ENCODE measurements at regions of chr6 and their contacts with region 1.

Region 1: GRCh38 chr6:27518881-27519795 is 46.2 kb upstream of the ZNF184 start:
- DNase-seq: peak; percentile 65
- ATAC-seq: peak; percentile 85
- H3K4me3 Mint-ChIP-seq: peak overlapping the region; percentile 70
- H3K27ac Mint-ChIP-seq: peak overlapping the region; percentile 47
- H3K4me1 Mint-ChIP-seq: peaks cover 11% of the 10 kb centered on the region
- H3K27me3 Mint-ChIP-seq: peaks cover 28% of the 10 kb centered on the region

Region 2: GRCh38 chr6:27502508-27503435 is 16.4 kb before region 1 on chr6:
- CTCF ChIA-PET with region 1: interaction called, 40 read pairs
- POLR2A ChIA-PET with region 1: interaction called, 3 read pairs
- DNase-seq: peak; percentile 80
- ATAC-seq: peak; percentile 74
- H3K4me3 Mint-ChIP-seq: peak overlapping the region; percentile 76
- H3K27ac Mint-ChIP-seq: peak overlapping the region; percentile 74
- H3K4me1 Mint-ChIP-seq: peaks cover 22% of the 10 kb centered on the region
- H3K27me3 Mint-ChIP-seq: peaks cover 37% of the 10 kb centered on the region

Region 3: DNA sequence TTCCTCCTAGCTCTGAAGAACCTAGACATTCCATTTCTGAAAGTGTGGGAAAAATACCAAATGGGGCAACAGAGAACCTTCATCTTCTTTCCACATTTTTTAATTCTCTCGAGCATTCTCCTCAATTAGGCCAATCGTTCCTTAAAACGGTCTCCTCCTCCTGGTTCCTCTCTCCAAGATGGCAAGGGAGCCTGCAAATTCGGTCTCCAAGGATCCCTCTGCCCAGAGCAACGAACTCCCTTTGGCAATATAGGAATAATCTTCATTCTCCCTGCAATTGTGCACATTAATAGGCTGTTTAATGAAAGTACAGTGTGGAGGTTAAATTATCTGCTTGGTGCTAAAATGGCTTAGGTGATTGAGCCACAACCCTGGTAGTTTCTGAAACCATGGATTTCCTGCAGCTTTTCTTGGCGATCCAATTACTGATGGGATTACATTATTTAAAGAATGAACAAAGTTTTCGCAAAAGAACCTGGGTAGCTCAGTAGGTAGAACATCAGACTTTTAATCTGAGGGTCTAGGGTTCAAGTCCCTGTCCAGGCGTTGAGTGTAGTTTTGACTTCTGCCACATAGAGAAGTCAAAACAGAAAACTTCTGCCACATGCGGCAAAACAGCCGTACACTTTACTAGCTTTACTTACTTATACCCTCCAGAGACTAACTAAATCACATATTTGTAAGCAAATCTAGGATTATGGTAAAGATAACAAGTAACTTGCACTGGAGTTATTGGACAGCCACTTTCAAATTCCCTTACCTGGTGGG is 56.6 kb after region 1 on chr6:
- CTCF ChIA-PET with region 1: no interaction called
- POLR2A ChIA-PET with region 1: no interaction called
- DNase-seq: no peak
- ATAC-seq: no peak
- H3K4me3 Mint-ChIP-seq: no peak overlapping the region
- H3K27ac Mint-ChIP-seq: no peak overlapping the region
- H3K4me1 Mint-ChIP-seq: no peaks in the 10 kb centered on the region
- H3K27me3 Mint-ChIP-seq: peaks cover 21% of the 10 kb centered on the region

Region 4: GRCh38 chr6:27608916-27609883 is 90.1 kb after region 1 on chr6:
- CTCF ChIA-PET with region 1: interaction called, 26 read pairs
- POLR2A ChIA-PET with region 1: interaction called, 4 read pairs
- DNase-seq: peak; percentile 49
- ATAC-seq: no peak
- H3K4me3 Mint-ChIP-seq: no peak overlapping the region
- H3K27ac Mint-ChIP-seq: no peak overlapping the region
- H3K4me1 Mint-ChIP-seq: peaks cover 21% of the 10 kb centered on the region
- H3K27me3 Mint-ChIP-seq: peaks cover 23% of the 10 kb centered on the region

Region 5: DNA sequence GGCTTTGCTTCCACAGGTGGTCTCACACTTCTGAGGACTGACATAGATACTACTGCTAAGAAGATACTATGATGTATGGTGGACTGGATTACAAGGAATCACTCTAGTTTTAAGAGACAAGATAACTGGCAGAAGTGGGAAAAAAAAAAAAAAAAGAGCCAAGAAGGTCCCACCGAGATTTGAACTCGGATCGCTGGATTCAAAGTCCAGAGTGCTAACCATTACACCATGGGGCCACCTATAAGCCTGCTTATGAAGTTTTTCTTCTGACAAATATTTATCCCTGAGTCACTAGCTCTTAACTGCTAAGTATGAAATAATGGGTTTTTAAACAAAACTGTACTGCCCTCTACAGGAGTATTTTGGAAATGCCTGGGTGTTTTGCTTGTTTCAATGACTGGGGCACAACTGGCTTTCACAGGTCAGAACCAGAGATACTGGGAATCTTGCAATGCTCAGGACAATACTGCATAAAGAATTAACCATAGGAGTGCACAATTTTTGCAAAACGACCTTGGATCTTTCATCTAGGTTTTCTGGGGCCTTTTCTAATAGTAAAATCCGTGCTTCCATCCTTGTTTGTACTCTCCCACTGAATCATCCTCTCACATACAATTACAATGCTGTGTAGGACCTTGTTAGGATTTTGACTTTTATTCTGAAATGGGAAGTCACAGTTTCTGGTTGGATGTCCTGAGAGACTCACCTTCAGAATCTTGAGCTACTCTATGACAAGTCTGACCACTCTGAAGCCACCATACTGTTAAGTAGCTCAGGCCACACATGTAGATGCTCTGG is 276.8 kb after region 1 on chr6:
- CTCF ChIA-PET with region 1: interaction called, 12 read pairs
- POLR2A ChIA-PET with region 1: no interaction called
- DNase-seq: peak; percentile 83
- ATAC-seq: peak; percentile 52
- H3K4me3 Mint-ChIP-seq: peak overlapping the region; percentile 1
- H3K27ac Mint-ChIP-seq: no peak overlapping the region
- H3K4me1 Mint-ChIP-seq: peaks cover 49% of the 10 kb centered on the region
- H3K27me3 Mint-ChIP-seq: peaks cover 13% of the 10 kb centered on the region